Naive thymus-derived CD8-positive, alpha-beta T cell (primary cell): ENCODE measurements at regions of chr1 and their contacts with region 1.

Region 1: DNA sequence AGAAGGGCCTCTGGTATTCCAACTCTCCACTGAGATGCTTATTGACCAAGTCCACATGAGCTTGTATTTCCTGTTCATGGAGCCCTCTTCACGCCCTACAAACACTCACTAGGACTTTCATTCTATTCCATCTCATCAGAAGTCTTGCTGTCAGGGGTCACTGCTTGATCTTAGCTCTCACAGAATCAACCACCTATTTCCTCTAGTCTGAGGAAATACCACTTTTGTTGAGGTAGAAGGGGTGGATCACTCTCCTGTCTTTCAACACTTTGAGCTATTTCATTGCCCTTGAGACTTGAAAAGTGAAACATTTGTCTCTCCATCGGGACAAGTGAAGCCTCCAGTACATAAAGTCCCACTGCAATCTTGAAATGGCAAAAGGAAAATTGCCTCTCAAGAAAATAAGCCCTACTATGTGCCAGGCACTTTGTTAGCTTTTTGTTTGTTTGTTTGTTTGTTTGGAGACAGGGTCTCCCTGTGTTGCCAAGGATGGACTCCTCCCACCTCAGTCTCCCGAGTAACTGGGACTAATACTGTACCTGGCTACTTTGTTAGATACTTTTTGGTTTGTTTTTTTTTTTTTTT is 19.8 kb upstream of the FAM110D start:
- DNase-seq: peak in 3 of 10 donors; percentile 17 to 41 (median 35)
- ATAC-seq: peak; percentile 73 to 89
- H3K4me3 Mint-ChIP-seq: peak overlapping the region in 7 of 10 donors; percentile 8 to 61 (median 39)
- H3K27ac Mint-ChIP-seq: peak overlapping the region in 9 of 10 donors; percentile 20 to 88 (median 72)
- H3K4me1 Mint-ChIP-seq: peaks cover 7 to 16% (median 13%) of the 10 kb centered on the region in 4 donors
- H3K27me3 Mint-ChIP-seq: no peaks in the 10 kb centered on the region

Region 2: DNA sequence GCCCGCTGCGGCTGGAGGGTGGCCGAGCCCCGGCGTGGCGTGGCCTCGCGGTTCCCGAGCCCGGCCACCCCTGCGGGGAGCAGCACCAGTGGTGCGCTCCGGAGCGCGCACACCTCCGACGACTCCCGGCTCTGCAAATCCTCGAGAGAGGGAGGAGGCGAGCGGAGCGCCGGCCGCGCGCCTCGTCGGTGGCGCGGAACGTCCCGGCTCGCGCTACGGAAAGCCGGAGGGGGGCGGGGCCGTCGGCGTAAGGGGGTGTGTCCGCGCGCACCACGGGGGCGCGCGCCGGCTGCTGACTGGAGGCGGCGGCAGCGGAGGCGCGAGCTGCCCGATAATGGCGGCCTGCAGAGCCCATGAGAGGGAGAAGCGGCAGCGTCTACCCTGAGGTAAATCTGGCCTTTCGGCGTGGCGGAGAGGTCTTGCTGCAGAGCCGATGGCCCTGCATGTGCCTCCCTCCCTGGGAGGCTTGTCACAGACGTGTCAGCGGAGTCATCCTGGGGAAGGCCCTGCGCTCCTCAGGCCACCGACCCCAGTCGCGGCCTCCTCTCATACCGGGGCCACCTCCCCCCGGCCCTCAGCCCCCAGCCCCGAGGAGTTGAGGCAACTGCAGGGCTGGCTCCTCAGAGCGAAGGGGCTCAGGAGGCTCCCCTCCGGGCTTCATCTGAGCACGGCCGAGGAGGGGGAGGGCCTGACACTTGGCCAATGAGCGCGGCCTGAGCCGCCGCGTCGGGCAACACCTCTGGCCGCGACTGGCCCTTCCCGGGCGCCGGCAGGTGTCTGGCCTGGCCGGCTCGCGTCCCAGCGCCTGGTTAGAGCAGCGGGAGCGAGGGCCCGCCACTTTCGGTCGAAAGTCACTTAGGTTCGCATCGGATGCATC is 27.3 kb before region 1 on chr1 and contains the start of gene PDIK1L:
- POLR2A ChIA-PET with region 1: interaction called, 22 read pairs
- DNase-seq: peak; percentile 90 to 98 (median 94)
- ATAC-seq: peak; percentile 80 to 89
- H3K4me3 Mint-ChIP-seq: peak within 1 kb of the TSS; percentile 91 to 98 (median 94)
- H3K27ac Mint-ChIP-seq: peak within 1 kb of the TSS; percentile 82 to 97 (median 95)
- H3K4me1 Mint-ChIP-seq: peaks cover 14 to 33% (median 23%) of the 10 kb centered on the region in 4 donors
- H3K27me3 Mint-ChIP-seq: no peaks in the 10 kb centered on the region
- polyA plus RNA-seq, gene PDIK1L: 3.5 to 5.1 (median 3.7) TPM